CD4-positive, alpha-beta memory T cell (primary cell): ENCODE measurements at regions of chr19 and their contacts with region 1.

Region 1: GRCh38 chr19:43826787-43827754 is at the start of gene ZNF283:
- DNase-seq: peak; percentile 73 to 80 (median 76)
- H3K4me3 ChIP-seq: peak within 1 kb of the TSS; percentile 70 to 73
- H3K4me3 Mint-ChIP-seq: peak within 1 kb of the TSS; percentile 73 to 94 (median 91)
- H3K27ac ChIP-seq: peak within 1 kb of the TSS; percentile 33
- H3K27ac Mint-ChIP-seq: peak within 1 kb of the TSS; percentile 41 to 89 (median 83)
- H3K4me1 ChIP-seq: peaks cover 13% of the 10 kb centered on the region
- H3K4me1 Mint-ChIP-seq: peaks cover 9 to 20% (median 16%) of the 10 kb centered on the region in 4 donors
- H3K27me3 ChIP-seq: no peaks in the 10 kb centered on the region
- H3K27me3 Mint-ChIP-seq: peaks cover 0 to 1% of the 10 kb centered on the region in 2 donors
- total RNA-seq, gene ZNF283: 18.1 to 20.7 TPM

Region 2: GRCh38 chr19:43754503-43755255 is 72.4 kb before region 1 on chr19 and contains the start of gene SMG9:
- CTCF ChIA-PET with region 1: no interaction called
- POLR2A ChIA-PET with region 1: interaction called, 3 read pairs
- intact Hi-C with region 1: loop called (anchors 2 kb)
- DNase-seq: peak; percentile 98 to 100 (median 99)
- H3K4me3 ChIP-seq: peak within 1 kb of the TSS; percentile 94 to 98
- H3K4me3 Mint-ChIP-seq: peak within 1 kb of the TSS; percentile 90 to 97 (median 96)
- H3K27ac ChIP-seq: peak within 1 kb of the TSS; percentile 93
- H3K27ac Mint-ChIP-seq: peak within 1 kb of the TSS; percentile 96 to 99 (median 99)
- H3K4me1 ChIP-seq: peaks cover 38% of the 10 kb centered on the region
- H3K4me1 Mint-ChIP-seq: peaks cover 22 to 63% (median 41%) of the 10 kb centered on the region in 4 donors
- H3K27me3 ChIP-seq: no peaks in the 10 kb centered on the region
- H3K27me3 Mint-ChIP-seq: no peaks in the 10 kb centered on the region
- total RNA-seq, gene SMG9: 57.6 to 57.9 TPM